ENCODE measurements at regions of chr1 and their contacts with region 1.

Region 1: GRCh38 chr1:76035053-76035452 is 39.5 kb upstream of the ST6GALNAC3 start:
- DNase-seq: peak; percentile 17
- H3K4me3 Mint-ChIP-seq: no peak overlapping the region
- H3K27ac Mint-ChIP-seq: no peak overlapping the region
- H3K4me1 Mint-ChIP-seq: no peaks in the 10 kb centered on the region
- H3K27me3 Mint-ChIP-seq: no peaks in the 10 kb centered on the region
- CTCF ChIP-seq: peak; percentile 16

Region 2: DNA sequence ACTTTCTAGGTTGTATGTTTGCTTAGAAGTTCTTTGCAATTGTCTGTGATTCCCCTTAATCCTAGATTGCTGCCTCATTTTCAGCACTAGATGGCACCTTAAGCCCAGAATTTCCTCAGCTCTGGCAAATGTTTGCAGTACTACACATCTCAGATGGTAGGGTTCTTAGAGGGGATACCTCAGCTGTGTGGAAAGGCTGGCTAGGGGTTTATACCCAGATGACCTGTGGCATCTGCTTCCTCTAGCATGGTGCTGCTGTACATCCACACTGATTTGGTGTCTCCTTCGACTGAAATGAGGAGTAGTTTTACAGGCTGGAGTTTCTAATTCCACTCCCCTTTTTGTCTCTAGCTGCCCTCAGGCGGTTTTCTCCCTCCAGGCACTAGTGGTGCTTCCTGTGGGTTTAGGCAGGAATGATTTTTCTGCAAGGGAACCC is 126.3 kb before region 1 on chr1:
- CTCF ChIA-PET with region 1: no interaction called
- intact Hi-C with region 1: loop called (anchors 5 kb)
- DNase-seq: peak; percentile 39
- H3K4me3 Mint-ChIP-seq: no peak overlapping the region
- H3K27ac Mint-ChIP-seq: no peak overlapping the region
- H3K4me1 Mint-ChIP-seq: no peaks in the 10 kb centered on the region
- H3K27me3 Mint-ChIP-seq: no peaks in the 10 kb centered on the region
- CTCF ChIP-seq: peak; percentile 23

Region 3: DNA sequence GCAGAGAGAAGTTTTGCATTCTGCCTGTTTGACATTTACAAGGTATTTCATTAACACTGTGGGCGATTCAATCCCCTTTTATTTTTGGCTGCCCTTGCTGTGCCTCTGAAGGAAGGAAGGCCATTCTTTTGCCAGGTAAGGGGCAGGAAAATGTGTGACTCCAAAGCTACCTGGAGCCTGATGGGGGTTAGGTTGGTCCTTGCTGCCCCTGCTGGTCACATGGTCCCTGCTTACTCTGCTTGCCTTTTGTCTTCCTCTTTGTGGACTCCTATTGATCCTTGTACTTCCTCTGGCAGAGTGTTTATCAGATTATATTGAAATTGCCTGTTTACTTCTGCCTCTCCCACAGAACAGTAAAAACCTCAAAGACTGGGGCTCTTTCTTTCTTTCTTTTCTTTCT is 105.2 kb after region 1 on chr1:
- CTCF ChIA-PET with region 1: no interaction called
- intact Hi-C with region 1: loop called (anchors 5 kb)
- DNase-seq: peak; percentile 10
- H3K4me3 Mint-ChIP-seq: no peak overlapping the region
- H3K27ac Mint-ChIP-seq: no peak overlapping the region
- H3K4me1 Mint-ChIP-seq: no peaks in the 10 kb centered on the region
- H3K27me3 Mint-ChIP-seq: no peaks in the 10 kb centered on the region
- CTCF ChIP-seq: no peak

Region 4: DNA sequence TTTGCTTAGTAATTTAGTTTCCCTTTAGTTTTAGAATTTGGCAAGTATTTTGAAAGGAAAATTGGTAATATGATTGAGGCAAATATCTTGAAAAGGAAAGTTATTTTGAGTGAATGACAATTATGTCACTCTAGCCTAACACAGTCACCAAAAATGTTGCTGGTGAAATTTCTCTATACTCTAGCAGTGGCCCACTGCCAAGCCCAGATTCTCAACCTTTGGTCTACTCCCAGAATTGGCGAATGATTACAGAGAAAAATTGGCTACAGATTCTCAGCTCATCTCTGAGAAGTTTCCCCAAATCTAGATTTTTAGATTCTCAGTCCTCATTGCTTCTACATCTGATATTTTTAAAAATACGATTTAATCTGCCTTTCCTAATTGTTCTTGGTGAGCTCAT is 1099.3 kb after region 1 on chr1:
- CTCF ChIA-PET with region 1: no interaction called
- intact Hi-C with region 1: loop called (anchors 10 kb)
- DNase-seq: no peak
- H3K4me3 Mint-ChIP-seq: no peak overlapping the region
- H3K27ac Mint-ChIP-seq: no peak overlapping the region
- H3K4me1 Mint-ChIP-seq: no peaks in the 10 kb centered on the region
- H3K27me3 Mint-ChIP-seq: no peaks in the 10 kb centered on the region
- CTCF ChIP-seq: no peak

Measured in Calu3 (cell line).